Activated CD8-positive, alpha-beta T cell treated with anti-CD3 and anti-CD28 coated beads for 36 hours (primary cell): ENCODE measurements at regions of chr2 and their contacts with region 1.

Region 1: DNA sequence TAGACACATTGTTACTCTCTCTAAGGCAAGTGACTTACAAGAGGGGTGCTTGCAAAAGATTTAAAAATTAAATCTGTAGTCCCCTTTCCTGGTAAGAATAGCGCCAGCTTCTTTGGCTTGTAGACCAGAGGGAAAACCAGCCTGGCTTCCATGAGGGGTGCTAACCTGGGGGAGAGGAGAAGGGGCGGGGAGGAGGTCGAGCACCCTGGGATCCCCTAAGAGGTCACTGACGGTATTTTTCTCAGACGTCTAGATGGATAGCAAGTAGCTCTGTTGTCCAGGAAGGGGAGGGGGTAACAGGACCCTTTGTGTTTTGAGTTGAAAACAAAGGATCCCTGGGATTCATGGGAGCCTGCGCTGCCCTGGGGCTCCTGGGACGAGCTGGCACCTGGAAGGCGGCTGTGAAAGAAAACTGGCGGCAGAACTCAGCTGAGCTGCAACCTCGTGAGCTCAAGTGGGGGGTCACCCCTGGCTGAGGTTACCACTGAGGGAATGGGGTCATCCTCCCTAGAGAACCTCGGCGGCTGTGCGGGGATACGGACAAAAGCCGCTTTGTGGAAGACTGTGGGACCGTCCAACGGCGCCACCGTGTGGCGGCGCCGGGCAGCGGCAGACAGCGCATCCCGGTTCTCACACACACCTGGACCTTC is 37.8 kb upstream of the MRPL19 start:
- DNase-seq: peak; percentile 65
- ATAC-seq: peak; percentile 91
- H3K4me3 Mint-ChIP-seq: no peak overlapping the region
- H3K27ac Mint-ChIP-seq: no peak overlapping the region
- H3K4me1 Mint-ChIP-seq: peaks cover 3% of the 10 kb centered on the region
- H3K27me3 Mint-ChIP-seq: peaks cover 57% of the 10 kb centered on the region
- CTCF ChIP-seq: peak; percentile 94

Region 2: GRCh38 chr2:75466708-75467311 is 142.0 kb before region 1 on chr2:
- CTCF ChIA-PET with region 1: interaction called, 45 read pairs
- POLR2A ChIA-PET with region 1: no interaction called
- intact Hi-C with region 1: loop called (anchors 2 kb)
- DNase-seq: peak; percentile 42
- ATAC-seq: no peak
- H3K4me3 Mint-ChIP-seq: no peak overlapping the region
- H3K27ac Mint-ChIP-seq: no peak overlapping the region
- H3K4me1 Mint-ChIP-seq: no peaks in the 10 kb centered on the region
- H3K27me3 Mint-ChIP-seq: peaks cover 14% of the 10 kb centered on the region
- CTCF ChIP-seq: peak; percentile 59

Region 3: DNA sequence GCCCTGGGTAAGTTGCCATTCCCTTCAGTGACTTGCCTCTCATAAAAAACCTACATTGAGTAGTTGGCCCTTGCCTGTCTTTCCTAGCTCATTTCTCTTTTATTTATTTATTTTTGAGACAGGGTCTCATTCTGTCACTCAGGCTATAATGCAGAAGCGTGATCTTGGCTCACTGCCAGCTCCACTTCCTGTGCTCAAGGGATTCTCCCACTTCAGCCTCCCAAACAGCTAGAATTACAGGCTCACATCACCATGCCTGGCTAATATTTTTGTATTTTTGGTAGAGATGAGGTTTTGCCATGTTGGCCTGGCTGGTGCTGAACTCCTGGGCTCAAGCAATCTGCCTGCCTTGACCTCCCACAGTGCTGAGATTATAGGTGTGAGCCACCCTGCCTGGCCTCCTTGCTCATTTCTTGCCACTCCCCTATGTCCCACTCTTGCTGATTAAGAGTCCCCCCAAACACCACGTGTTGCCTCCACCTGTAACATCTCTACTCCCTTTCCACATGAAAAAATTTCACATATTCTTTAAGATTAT is 60.7 kb before region 1 on chr2:
- CTCF ChIA-PET with region 1: interaction called, 10 read pairs
- POLR2A ChIA-PET with region 1: no interaction called
- intact Hi-C with region 1: no loop called
- DNase-seq: peak; percentile 13
- ATAC-seq: no peak
- H3K4me3 Mint-ChIP-seq: no peak overlapping the region
- H3K27ac Mint-ChIP-seq: no peak overlapping the region
- H3K4me1 Mint-ChIP-seq: no peaks in the 10 kb centered on the region
- H3K27me3 Mint-ChIP-seq: peaks cover 17% of the 10 kb centered on the region
- CTCF ChIP-seq: no peak

Region 4: GRCh38 chr2:75595551-75596395 is 13.0 kb before region 1 on chr2:
- CTCF ChIA-PET with region 1: interaction called, 14 read pairs
- POLR2A ChIA-PET with region 1: no interaction called
- intact Hi-C with region 1: no loop called
- DNase-seq: no peak
- ATAC-seq: no peak
- H3K4me3 Mint-ChIP-seq: no peak overlapping the region
- H3K27ac Mint-ChIP-seq: no peak overlapping the region
- H3K4me1 Mint-ChIP-seq: no peaks in the 10 kb centered on the region
- H3K27me3 Mint-ChIP-seq: peaks cover 3% of the 10 kb centered on the region
- CTCF ChIP-seq: no peak

Region 5: GRCh38 chr2:76008001-76008702 is 399.3 kb after region 1 on chr2:
- CTCF ChIA-PET with region 1: no interaction called
- POLR2A ChIA-PET with region 1: no interaction called
- intact Hi-C with region 1: no loop called
- DNase-seq: no peak
- ATAC-seq: no peak
- H3K4me3 Mint-ChIP-seq: no peak overlapping the region
- H3K27ac Mint-ChIP-seq: no peak overlapping the region
- H3K4me1 Mint-ChIP-seq: no peaks in the 10 kb centered on the region
- H3K27me3 Mint-ChIP-seq: no peaks in the 10 kb centered on the region
- CTCF ChIP-seq: no peak